PC-3 (cell line): ENCODE measurements at regions of chr15 and their contacts with region 1.

Region 1: GRCh38 chr15:42919769-42920518 is 634 bp downstream of the TTBK2 start:
- DNase-seq: peak; percentile 35
- ATAC-seq: peak; percentile 26
- H3K4me3 ChIP-seq: peak overlapping the region; percentile 74
- H3K27ac ChIP-seq: no peak overlapping the region
- H3K4me1 ChIP-seq: peaks cover 21% of the 10 kb centered on the region
- H3K27me3 ChIP-seq: no peaks in the 10 kb centered on the region
- CTCF ChIP-seq: no peak

Region 2: DNA sequence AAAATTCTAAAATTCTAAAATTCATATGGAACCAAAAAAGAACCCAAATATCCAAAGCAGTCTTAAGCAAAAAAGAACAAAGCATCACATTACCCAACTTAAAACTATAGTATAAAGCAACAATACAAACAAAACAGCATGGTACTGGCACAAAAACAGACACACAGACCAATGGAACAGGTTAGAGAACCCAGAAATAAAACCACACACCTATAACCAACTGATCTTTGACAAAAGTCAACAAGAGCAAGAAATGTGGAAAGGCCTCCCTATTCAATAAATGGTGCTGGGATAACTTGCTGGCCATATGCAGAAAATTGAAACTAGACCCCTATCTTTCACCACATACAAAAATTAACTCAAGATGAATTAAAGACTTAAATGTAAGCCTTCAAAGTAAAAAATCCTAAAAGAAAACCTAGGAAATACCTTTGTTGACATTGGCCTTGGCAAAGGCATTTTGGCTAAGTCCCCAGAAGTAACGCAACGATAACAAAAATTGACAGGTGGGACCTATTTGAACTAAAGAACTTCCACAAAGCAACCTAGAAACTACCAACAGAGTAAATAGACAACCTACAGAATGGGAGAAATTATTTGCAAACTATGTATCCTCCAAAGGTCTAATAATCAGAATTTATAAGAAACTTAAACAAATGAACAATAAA is 56.2 kb before region 1 on chr15:
- CTCF ChIA-PET with region 1: no interaction called
- POLR2A ChIA-PET with region 1: no interaction called
- intact Hi-C with region 1: loop called (anchors 5 kb)
- DNase-seq: peak; percentile 45
- ATAC-seq: peak; percentile 38; the same call in 1 of the 2 replicates
- H3K4me3 ChIP-seq: no peak overlapping the region
- H3K27ac ChIP-seq: no peak overlapping the region
- H3K4me1 ChIP-seq: peaks cover 16% of the 10 kb centered on the region
- H3K27me3 ChIP-seq: no peaks in the 10 kb centered on the region
- CTCF ChIP-seq: no peak

Region 3: DNA sequence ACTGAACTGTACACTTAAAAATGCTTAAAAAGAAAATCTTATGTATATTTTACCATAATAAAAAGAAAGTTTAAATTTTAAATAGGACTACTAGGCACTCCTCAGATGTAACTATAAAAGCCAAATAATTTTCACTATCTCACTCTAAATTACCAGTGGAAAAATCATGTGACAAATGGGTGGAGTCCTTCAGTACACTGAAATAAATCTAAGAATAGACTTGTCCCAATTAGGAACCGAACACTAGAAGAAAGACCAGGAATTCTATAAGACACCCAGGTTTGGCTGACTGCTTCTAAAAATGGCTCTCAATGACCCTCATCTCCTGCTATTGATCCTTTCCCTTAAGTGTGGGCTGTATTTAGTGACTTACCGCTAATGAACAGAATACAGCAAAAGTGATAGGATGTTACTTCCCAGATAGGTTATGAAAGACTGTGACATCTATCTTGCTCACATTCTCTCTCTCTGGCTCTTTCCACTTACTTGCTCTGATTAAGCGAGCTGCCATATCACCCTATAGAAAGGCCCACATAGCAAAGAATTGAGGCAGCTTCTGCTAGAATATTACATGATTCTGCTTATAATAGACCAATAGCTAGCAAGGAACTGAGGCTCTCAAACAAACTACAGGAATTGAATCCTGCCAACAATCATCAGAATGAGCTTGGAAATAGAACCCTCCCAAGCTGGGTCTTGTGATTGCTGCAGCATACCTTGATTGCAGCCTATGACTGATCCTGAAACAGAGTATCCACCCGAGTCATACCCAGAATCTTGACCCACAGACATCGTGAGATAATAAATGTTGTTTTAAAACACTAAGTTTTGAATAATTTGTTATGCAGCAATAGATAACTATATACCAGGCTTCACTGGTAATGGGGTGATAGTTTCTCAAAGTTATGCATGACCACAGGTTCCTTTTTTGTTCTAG is 16.3 kb before region 1 on chr15:
- CTCF ChIA-PET with region 1: no interaction called
- POLR2A ChIA-PET with region 1: no interaction called
- intact Hi-C with region 1: no loop called
- DNase-seq: no peak
- ATAC-seq: no peak
- H3K4me3 ChIP-seq: no peak overlapping the region
- H3K27ac ChIP-seq: no peak overlapping the region
- H3K4me1 ChIP-seq: no peaks in the 10 kb centered on the region
- H3K27me3 ChIP-seq: no peaks in the 10 kb centered on the region
- CTCF ChIP-seq: no peak